Caco-2 (cell line): ENCODE measurements at regions of chr9 and their contacts with region 1.

Region 1: DNA sequence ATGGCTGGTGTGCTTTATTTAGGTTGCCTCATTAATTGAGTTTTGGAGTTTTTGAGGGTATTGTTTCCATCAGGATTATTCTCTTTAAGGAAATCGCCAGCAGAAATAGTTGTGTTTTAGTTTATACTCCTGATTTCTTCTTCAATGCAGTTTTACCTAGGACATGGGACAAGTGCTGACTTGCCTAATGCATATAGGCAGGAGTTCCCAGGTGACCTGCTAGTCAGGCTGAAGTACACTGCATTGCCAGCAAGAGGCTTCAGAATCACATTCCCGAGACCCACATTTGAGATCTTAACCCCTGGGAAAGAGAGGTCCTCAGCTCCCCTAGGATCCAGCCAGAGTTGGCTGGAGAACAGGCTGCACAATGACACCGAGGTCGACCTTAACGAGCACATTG is 1.5 kb upstream of the OR1N2 start:
- DNase-seq: no peak
- H3K4me3 ChIP-seq: no peak overlapping the region
- H3K4me3 Mint-ChIP-seq: no peak overlapping the region
- H3K27ac Mint-ChIP-seq: no peak overlapping the region
- H3K4me1 ChIP-seq: no peaks in the 10 kb centered on the region
- H3K4me1 Mint-ChIP-seq: no peaks in the 10 kb centered on the region
- H3K27me3 ChIP-seq: peaks cover 1% of the 10 kb centered on the region
- H3K27me3 Mint-ChIP-seq: peaks cover 25% of the 10 kb centered on the region
- CTCF ChIP-seq: no peak

Region 2: DNA sequence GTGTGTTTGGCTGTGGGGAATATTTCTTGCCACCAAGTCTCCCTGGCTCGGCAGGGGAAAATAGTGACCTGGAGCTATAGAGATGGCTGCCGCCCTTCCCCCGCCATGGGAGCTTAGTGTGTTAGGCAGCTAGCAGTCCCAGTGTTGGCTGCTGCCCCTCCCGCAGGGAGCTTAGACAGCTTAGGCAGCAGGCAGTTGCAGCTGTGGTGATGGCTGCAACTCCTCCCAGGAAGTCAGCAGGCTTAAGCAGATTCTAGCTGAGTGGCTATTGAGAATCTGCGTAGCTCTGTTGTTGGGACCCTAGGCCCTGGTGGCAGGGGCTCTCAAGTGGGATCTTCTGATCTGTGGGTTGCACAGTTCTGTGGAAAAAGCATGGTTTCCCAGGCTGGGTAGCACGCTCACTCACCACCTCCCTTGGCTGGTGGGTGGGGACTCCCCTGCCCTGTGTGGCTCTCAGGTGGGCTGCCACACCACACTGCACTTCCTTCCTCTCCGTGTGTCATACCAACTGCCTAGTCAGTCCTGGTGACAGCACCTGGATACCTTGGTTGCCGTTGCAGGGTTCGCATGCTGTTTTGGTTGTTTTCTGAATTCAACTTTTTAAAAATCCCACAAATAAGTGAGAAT is 10.9 kb after region 1 on chr9:
- CTCF ChIA-PET with region 1: no interaction called
- POLR2A ChIA-PET with region 1: no interaction called
- intact Hi-C with region 1: loop called (anchors 1 kb)
- DNase-seq: no peak
- H3K4me3 ChIP-seq: no peak overlapping the region
- H3K4me3 Mint-ChIP-seq: no peak overlapping the region
- H3K27ac Mint-ChIP-seq: no peak overlapping the region
- H3K4me1 ChIP-seq: no peaks in the 10 kb centered on the region
- H3K4me1 Mint-ChIP-seq: no peaks in the 10 kb centered on the region
- H3K27me3 ChIP-seq: no peaks in the 10 kb centered on the region
- H3K27me3 Mint-ChIP-seq: peaks cover 12% of the 10 kb centered on the region
- CTCF ChIP-seq: no peak

Region 3: DNA sequence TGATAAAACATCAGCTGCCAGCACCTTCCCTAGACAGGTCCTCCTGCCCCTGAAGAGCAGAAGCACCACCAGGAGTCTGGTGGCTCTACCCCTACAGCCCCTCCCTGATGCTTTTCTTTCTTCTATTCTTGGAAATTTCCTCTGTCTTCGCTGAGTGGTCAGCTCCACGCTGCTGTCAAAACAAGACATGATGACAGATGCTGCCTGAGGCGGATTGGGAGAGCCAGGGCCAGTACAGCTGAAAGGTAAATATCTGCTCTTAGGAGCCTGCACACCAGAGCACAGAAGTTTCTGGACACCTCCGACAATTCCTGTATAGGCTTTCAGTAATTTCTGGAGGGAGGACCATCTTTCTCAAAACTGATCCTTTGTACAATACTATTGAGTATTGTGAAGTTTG is 58.4 kb after region 1 on chr9:
- CTCF ChIA-PET with region 1: no interaction called
- POLR2A ChIA-PET with region 1: no interaction called
- intact Hi-C with region 1: no loop called
- DNase-seq: no peak
- H3K4me3 ChIP-seq: no peak overlapping the region
- H3K4me3 Mint-ChIP-seq: no peak overlapping the region
- H3K27ac Mint-ChIP-seq: no peak overlapping the region
- H3K4me1 ChIP-seq: no peaks in the 10 kb centered on the region
- H3K4me1 Mint-ChIP-seq: no peaks in the 10 kb centered on the region
- H3K27me3 ChIP-seq: no peaks in the 10 kb centered on the region
- H3K27me3 Mint-ChIP-seq: peaks cover 12% of the 10 kb centered on the region
- CTCF ChIP-seq: no peak